Heart left ventricle (tissue), 16 donors: ENCODE measurements at regions of chr10 and their contacts with region 1.

Region 1: GRCh38 chr10:79374312-79375191 is 27.3 kb downstream of the PPIF start:
- DNase-seq: peak; percentile 78 to 89 (median 83)
- ATAC-seq: peak; percentile 27 to 68 (median 58)
- H3K4me3 ChIP-seq: no peak overlapping the region
- H3K27ac ChIP-seq: no peak overlapping the region
- H3K4me1 ChIP-seq: peaks cover 0 to 17% (median 11%) of the 10 kb centered on the region in 12 donors
- H3K27me3 ChIP-seq: no peaks in the 10 kb centered on the region
- CTCF ChIP-seq: peak in 11 of 12 donors; percentile 90 to 99 (median 98)
- POLR2A ChIP-seq: peak in 1 of 2 donors; percentile 21

Region 2: DNA sequence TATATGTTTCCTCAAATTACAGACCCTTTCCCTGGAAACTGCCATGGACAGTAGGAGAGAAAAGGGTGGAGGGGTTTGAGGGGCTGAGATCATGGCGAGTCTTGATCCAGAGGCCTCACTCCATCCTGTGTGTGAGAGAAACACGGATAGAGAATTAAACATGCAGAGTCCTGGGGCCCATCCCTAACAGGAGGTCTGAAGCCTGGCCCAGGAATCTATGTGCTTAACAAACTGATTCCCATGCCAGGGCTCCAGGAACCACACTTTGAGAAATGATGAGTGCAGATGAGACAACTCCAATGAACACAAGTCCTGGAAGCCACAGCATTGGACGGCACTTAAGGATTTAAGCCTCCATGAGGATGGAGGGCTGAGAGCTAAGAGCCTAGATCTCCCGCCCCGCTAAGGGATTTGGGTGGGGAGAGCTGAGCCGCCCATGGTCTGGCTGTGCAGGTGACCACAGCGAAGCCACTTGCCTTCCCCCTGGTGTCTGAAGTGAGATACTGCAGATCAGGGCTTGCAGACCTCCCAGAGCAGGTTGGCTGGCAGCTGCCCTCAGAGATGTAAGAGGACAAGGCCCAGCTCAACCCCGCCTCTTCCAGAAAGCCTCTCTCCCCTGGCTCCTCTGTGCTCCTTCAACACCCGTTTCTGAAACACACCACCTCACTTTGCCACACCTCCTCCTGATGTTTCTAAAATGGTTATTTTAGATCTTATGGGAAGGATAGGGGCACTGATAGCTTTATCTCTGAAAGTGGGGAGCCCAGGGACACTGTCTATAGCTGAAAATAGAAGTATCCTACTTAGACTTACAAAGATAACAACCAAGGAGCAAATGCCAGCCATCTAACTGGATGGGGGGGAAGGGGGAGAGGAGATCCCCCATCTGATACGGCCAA is 113.0 kb after region 1 on chr10:
- intact Hi-C with region 1: loop called (anchors 1 to 5 kb)
- DNase-seq: peak in 4 of 5 donors; percentile 46 to 68 (median 58)
- ATAC-seq: peak; percentile 31 to 67 (median 61)
- H3K4me3 ChIP-seq: no peak overlapping the region
- H3K27ac ChIP-seq: peak overlapping the region in 11 of 12 donors; percentile 24 to 76 (median 50)
- H3K4me1 ChIP-seq: peaks cover 0 to 49% (median 15%) of the 10 kb centered on the region in 12 donors
- H3K27me3 ChIP-seq: no peaks in the 10 kb centered on the region
- CTCF ChIP-seq: peak; percentile 63 to 81 (median 71)
- POLR2A ChIP-seq: no peak

Region 3: GRCh38 chr10:79608505-79609375 is 234.2 kb after region 1 on chr10:
- intact Hi-C with region 1: loop called in 2 of 10 experiments (anchors 5 to 10 kb)
- DNase-seq: no peak
- ATAC-seq: peak in 2 of 4 donors; percentile 36 to 39
- H3K4me3 ChIP-seq: no peak overlapping the region
- H3K27ac ChIP-seq: no peak overlapping the region
- H3K4me1 ChIP-seq: no peaks in the 10 kb centered on the region
- H3K27me3 ChIP-seq: no peaks in the 10 kb centered on the region
- CTCF ChIP-seq: peak; percentile 34 to 65 (median 48)
- POLR2A ChIP-seq: no peak

Region 4: DNA sequence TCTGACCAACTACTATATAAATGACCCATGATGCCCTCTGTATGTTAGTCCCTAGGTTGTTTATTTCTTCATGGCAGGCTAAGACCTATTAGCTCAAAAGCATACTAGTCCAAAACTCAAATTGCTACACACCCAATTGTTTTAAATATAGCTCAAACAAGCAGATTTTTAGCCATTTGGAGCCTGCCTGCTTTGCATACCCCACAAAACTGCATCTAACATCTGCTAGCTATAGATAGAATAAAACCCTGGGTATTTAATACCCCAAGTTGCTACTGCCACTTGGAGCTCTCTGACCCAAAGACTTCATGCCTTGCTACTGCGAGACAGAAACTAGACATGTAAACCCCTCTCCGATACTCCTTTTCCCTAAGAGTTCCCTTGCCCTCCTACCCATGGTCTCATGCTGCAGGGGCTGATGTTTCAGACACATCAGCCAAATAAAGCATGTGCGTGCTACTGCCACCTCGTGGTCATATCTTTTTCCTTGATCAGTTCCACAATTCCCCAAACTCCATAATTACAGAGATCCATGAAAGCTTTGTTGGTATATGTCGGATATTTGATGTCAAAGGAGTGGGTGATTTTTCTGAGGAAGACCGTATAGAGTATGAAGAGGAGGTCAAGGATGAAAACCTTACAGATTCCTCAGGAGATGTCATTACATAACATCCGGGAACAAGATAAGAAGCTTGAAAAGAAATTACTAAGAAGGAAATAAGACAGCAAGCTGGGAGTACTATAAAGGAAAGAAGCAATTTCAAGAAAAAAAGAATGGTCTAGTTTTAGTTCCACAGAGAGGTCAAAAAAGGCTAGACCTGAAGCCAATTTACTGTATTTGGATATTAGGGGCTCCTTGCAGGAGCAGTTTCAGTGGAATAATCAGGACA is 1549.8 kb after region 1 on chr10:
- intact Hi-C with region 1: no loop called
- DNase-seq: peak in 3 of 5 donors; percentile 27 to 43 (median 32)
- ATAC-seq: peak in 2 of 4 donors; percentile 36 to 49
- H3K4me3 ChIP-seq: no peak overlapping the region
- H3K27ac ChIP-seq: no peak overlapping the region
- H3K4me1 ChIP-seq: no peaks in the 10 kb centered on the region
- H3K27me3 ChIP-seq: peaks cover 0 to 8% (median 0%) of the 10 kb centered on the region in 9 donors
- CTCF ChIP-seq: peak; percentile 60 to 83 (median 67)
- POLR2A ChIP-seq: no peak